Ascending aorta (tissue), 2 donors: ENCODE measurements at regions of chr18 and their contacts with region 1.

Region 1: DNA sequence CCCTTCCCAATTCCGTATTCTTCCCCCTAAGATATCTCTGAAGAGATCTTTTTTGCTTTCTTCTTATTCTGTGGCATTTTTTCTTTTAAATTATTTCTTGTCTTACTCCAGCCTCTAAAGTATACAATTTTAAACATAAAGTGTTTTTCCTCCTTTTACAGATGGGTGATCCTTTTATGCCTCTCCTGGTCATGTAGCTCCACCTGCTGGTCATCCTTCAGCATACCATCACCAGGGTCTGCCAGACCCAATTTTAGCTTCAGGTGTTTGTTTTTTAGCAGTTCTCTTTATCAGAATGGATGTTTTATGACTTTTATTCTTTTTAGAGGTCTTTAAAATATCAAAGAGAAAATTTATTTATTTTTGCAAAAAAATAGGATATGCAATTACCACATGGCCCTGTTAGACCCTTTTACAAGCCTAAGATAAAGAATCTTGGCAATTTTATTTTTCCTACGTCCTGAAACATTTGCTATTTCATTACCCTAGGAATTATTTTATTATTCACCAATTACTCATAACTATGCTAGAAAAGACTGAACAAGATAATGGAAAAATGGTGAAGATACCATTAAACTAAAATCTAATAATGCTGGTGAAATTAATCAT is 55.5 kb downstream of the PIGN start:
- DNase-seq: peak in 1 of 2 donors; percentile 65
- H3K4me3 ChIP-seq: no peak overlapping the region
- H3K27ac ChIP-seq: no peak overlapping the region
- H3K4me1 ChIP-seq: peaks cover 0 to 3% of the 10 kb centered on the region in 2 donors
- H3K27me3 ChIP-seq: no peaks in the 10 kb centered on the region
- CTCF ChIP-seq: peak; percentile 79 to 90 (median 89)

Region 2: GRCh38 chr18:61551586-61551985 is 579.8 kb before region 1 on chr18:
- intact Hi-C with region 1: loop called (anchors 1 kb)
- DNase-seq: no peak
- H3K4me3 ChIP-seq: no peak overlapping the region
- H3K27ac ChIP-seq: no peak overlapping the region
- H3K4me1 ChIP-seq: no peaks in the 10 kb centered on the region
- H3K27me3 ChIP-seq: no peaks in the 10 kb centered on the region
- CTCF ChIP-seq: peak; percentile 70 to 89 (median 77)

Region 3: DNA sequence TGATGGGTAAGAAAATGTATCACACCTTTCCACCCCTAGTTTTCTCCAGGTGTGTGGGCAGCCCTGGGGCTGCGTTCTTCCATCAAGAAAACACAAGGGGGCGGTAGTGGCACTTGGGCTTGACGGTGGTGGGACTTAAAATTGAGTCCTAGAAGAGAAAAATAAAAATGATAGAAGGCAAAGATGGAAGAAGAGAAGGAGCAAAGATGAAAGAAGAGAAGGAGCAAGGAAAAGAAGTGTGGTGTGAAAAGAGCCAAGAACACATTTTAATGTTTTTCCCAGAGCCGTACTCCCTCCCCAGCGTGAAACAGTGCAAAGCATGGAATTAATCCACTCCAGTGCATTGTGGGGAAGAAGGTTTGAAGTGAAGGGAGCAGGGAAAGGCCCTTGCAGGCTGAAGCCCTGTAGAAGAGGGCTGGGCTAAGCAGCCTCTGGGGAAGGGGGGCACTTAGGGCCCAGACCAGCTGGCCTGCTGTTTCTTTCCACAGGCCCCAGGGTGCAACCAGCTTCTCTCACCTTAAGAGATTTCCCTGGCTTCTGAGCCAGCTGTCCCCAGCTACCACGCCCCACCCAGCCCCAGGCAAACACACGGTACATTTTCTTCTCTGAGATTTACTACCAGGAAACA is 495.4 kb before region 1 on chr18:
- intact Hi-C with region 1: loop called (anchors 2 kb)
- DNase-seq: peak in 1 of 2 donors; percentile 72
- H3K4me3 ChIP-seq: no peak overlapping the region
- H3K27ac ChIP-seq: no peak overlapping the region
- H3K4me1 ChIP-seq: peaks cover 0 to 6% of the 10 kb centered on the region in 2 donors
- H3K27me3 ChIP-seq: no peaks in the 10 kb centered on the region
- CTCF ChIP-seq: peak; percentile 60 to 93 (median 84)

Region 4: GRCh38 chr18:62413206-62413605 is 281.8 kb after region 1 on chr18:
- intact Hi-C with region 1: no loop called
- DNase-seq: no peak
- H3K4me3 ChIP-seq: no peak overlapping the region
- H3K27ac ChIP-seq: no peak overlapping the region
- H3K4me1 ChIP-seq: no peaks in the 10 kb centered on the region
- H3K27me3 ChIP-seq: no peaks in the 10 kb centered on the region
- CTCF ChIP-seq: no peak